CD8-positive, alpha-beta T cell (primary cell): ENCODE measurements at regions of chr22 and their contacts with region 1.

Region 1: GRCh38 chr22:41746567-41747400 is 47.5 kb downstream of the MEI1 start:
- DNase-seq: peak; percentile 3 to 78 (median 55)
- ATAC-seq: peak; percentile 71
- H3K4me3 ChIP-seq: no peak overlapping the region
- H3K4me3 Mint-ChIP-seq: no peak overlapping the region
- H3K27ac ChIP-seq: no peak overlapping the region
- H3K27ac Mint-ChIP-seq: no peak overlapping the region
- H3K4me1 ChIP-seq: no peaks in the 10 kb centered on the region
- H3K4me1 Mint-ChIP-seq: peaks cover 4% of the 10 kb centered on the region
- H3K27me3 ChIP-seq: no peaks in the 10 kb centered on the region
- H3K27me3 Mint-ChIP-seq: peaks cover 13% of the 10 kb centered on the region
- CTCF ChIP-seq: peak; percentile 43

Region 2: GRCh38 chr22:41780746-41781505 is 34.1 kb after region 1 on chr22:
- CTCF ChIA-PET with region 1: interaction called, 23 read pairs
- POLR2A ChIA-PET with region 1: interaction called, 11 read pairs
- intact Hi-C with region 1: loop called in 1 of 2 experiments (anchors 2 kb)
- DNase-seq: peak; percentile 77 to 99 (median 90)
- ATAC-seq: peak; percentile 92
- H3K4me3 ChIP-seq: peak overlapping the region; percentile 64 to 69
- H3K4me3 Mint-ChIP-seq: peak overlapping the region; percentile 89
- H3K27ac ChIP-seq: peak overlapping the region; percentile 86
- H3K27ac Mint-ChIP-seq: peak overlapping the region; percentile 99
- H3K4me1 ChIP-seq: peaks cover 32% of the 10 kb centered on the region
- H3K4me1 Mint-ChIP-seq: peaks cover 57% of the 10 kb centered on the region
- H3K27me3 ChIP-seq: no peaks in the 10 kb centered on the region
- H3K27me3 Mint-ChIP-seq: no peaks in the 10 kb centered on the region
- CTCF ChIP-seq: no peak

Region 3: GRCh38 chr22:41822317-41823060 is 75.7 kb after region 1 on chr22:
- CTCF ChIA-PET with region 1: interaction called, 4 read pairs
- POLR2A ChIA-PET with region 1: no interaction called
- intact Hi-C with region 1: loop called in 1 of 2 experiments (anchors 2 kb)
- DNase-seq: peak in 5 of 9 experiments; percentile 21 to 88 (median 48)
- ATAC-seq: peak; percentile 95
- H3K4me3 ChIP-seq: no peak overlapping the region
- H3K4me3 Mint-ChIP-seq: no peak overlapping the region
- H3K27ac ChIP-seq: no peak overlapping the region
- H3K27ac Mint-ChIP-seq: peak overlapping the region; percentile 72
- H3K4me1 ChIP-seq: no peaks in the 10 kb centered on the region
- H3K4me1 Mint-ChIP-seq: peaks cover 8% of the 10 kb centered on the region
- H3K27me3 ChIP-seq: no peaks in the 10 kb centered on the region
- H3K27me3 Mint-ChIP-seq: no peaks in the 10 kb centered on the region
- CTCF ChIP-seq: peak; percentile 57

Region 4: DNA sequence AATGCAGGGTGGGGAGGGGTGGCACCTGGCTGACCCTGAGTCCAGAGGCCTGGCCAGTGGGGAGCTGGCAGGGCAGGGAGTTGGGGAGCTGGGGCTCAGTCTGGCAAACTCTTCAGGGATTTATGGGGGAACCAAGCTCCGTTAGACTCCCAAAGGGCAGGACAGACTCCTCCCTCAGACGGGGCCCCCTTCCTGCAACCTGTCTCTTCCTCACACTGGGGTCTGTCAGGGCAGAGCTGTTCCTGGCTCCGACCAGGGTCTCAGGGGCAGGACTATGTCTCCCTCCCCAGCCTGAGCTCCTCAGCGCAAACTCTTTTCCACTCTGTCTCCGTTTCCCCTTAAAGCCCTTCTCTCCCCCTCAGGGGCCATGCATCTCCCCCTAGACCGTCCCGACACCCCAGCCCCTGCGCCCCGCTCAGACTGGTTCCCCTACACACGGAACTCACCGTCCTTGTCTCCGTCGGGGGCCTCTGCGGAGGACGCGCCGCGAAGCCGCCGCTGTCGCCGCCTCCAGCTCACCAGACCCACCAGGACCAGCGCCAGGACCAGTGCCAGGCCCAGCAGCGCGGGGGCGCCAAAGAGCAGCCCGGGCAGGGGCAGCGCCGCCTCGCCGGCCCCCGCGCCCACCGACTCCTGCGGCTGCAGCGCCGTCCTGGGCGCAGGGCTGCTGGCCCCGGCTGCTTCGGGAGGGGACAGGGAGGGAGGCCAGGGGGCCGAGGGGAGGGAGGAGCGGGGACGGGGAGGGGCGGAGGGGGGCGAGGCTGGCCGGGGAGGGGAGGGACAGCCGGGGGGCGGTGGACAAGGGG is 179.1 kb after region 1 on chr22:
- CTCF ChIA-PET with region 1: interaction called, 11 read pairs
- POLR2A ChIA-PET with region 1: no interaction called
- intact Hi-C with region 1: no loop called
- DNase-seq: peak; percentile 61 to 86 (median 80)
- ATAC-seq: peak; percentile 75
- H3K4me3 ChIP-seq: peak overlapping the region; percentile 43 to 57
- H3K4me3 Mint-ChIP-seq: peak overlapping the region; percentile 85
- H3K27ac ChIP-seq: no peak overlapping the region
- H3K27ac Mint-ChIP-seq: peak overlapping the region; percentile 69
- H3K4me1 ChIP-seq: peaks cover 18% of the 10 kb centered on the region
- H3K4me1 Mint-ChIP-seq: peaks cover 25% of the 10 kb centered on the region
- H3K27me3 ChIP-seq: peaks cover 0 to 3% of the 10 kb centered on the region in 2 experiments
- H3K27me3 Mint-ChIP-seq: no peaks in the 10 kb centered on the region
- CTCF ChIP-seq: peak; percentile 88